Activated CD4-positive, alpha-beta T cell treated with anti-CD3 and anti-CD28 coated beads, Interleukin-2, amount 10 ng/mL, durations not matched to agents 24 days and 14 days (primary cell): ENCODE measurements at regions of chr18 and their contacts with region 1.

Region 1: GRCh38 chr18:54284981-54285785 is 15.9 kb downstream of the POLI start:
- DNase-seq: peak; percentile 82
- H3K4me3 Mint-ChIP-seq: peak overlapping the region; percentile 19
- H3K27ac Mint-ChIP-seq: peak overlapping the region; percentile 78
- H3K4me1 Mint-ChIP-seq: peaks cover 18% of the 10 kb centered on the region
- H3K27me3 Mint-ChIP-seq: no peaks in the 10 kb centered on the region

Region 2: DNA sequence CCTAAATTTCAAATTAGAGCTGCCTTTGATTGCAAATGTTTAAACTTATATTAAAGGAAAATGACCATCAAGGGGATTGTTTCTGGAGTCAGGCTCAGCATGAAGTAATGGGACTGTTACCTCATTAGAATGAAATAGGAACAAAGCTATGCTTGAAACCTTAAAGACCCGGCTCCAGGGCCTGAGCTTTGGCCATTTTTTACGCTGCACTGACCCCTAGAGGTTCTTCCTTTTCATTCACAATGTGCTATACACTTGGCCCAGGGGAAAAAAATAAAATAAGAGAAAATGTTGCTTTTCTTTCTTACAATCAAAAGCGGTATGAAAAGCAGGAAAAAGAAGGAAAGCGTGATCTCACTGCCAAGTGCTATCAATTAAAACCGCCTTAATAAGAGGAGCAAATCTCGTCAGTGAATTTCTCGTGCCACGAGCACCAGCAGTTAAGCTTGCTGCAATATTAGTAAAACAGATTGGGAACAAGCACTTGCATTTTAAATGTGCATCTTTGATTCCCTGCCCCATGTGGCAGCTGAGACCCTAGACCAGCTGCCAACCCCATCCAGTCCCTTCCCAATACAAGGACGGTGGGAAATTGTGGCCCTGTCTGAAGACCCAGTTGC is 157.3 kb before region 1 on chr18:
- intact Hi-C with region 1: no loop called
- DNase-seq: peak; percentile 69
- H3K4me3 Mint-ChIP-seq: no peak overlapping the region
- H3K27ac Mint-ChIP-seq: no peak overlapping the region
- H3K4me1 Mint-ChIP-seq: peaks cover 15% of the 10 kb centered on the region
- H3K27me3 Mint-ChIP-seq: no peaks in the 10 kb centered on the region

Region 3: DNA sequence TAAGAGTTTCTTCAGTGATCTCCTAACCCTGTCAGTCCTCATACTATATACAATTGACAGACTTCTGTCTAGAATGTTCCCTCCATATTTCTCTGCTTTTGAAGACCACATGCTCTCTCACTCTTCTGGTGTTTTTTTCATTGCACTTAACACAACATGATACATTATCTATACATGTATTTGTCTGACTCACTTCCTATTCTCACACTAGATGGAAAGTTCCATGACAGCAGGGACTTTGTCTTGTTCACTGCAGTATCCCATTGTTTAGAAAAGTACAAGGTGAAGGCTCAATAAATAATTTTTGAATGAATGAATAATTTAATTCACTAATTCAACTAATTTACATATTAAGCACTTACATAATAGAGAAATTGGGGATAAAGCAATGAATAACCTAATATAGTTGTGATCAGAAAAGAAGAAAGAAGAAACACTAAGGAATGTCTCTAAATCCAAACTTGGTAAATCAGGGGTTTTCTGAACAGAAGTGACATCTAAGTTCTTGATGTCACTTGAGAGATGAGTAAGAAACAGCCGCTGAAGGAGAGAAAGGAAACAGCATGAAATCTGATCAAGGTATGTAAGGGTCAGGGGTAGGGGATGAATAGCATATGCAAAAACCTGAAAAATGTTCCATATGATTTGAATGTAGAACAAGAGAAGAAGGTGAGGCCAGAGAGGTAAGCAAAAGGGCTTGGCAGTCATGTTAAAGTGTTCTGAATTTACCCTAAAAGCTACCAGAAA is 103.2 kb before region 1 on chr18:
- intact Hi-C with region 1: loop called (anchors 1 kb)
- DNase-seq: no peak
- H3K4me3 Mint-ChIP-seq: no peak overlapping the region
- H3K27ac Mint-ChIP-seq: no peak overlapping the region
- H3K4me1 Mint-ChIP-seq: peaks cover 10% of the 10 kb centered on the region
- H3K27me3 Mint-ChIP-seq: no peaks in the 10 kb centered on the region

Region 4: DNA sequence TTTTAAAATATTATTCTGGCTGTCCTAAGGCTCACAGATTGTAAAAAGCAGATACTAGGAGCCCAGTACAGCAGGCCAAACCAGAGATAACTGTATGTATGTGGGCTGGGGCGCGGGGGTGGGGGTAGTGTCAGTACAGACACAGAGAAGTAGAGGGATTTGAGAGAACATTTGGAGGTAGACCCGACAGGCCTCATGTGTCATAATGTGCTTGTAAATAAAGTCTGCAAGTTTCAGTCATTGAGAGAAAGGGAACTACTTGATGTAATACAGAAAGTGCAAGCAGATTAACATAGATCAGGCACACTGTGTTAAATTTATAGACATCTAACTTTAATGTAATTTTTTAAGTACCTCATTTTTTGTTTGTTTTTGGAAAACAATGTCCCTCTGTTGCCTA is 23.3 kb before region 1 on chr18:
- intact Hi-C with region 1: loop called (anchors 1 kb)
- DNase-seq: peak; percentile 69
- H3K4me3 Mint-ChIP-seq: peak overlapping the region; percentile 54
- H3K27ac Mint-ChIP-seq: peak overlapping the region; percentile 96
- H3K4me1 Mint-ChIP-seq: peaks cover 42% of the 10 kb centered on the region
- H3K27me3 Mint-ChIP-seq: no peaks in the 10 kb centered on the region

Region 5: GRCh38 chr18:54357660-54358494 is 72.7 kb after region 1 on chr18 and contains the starts of genes C18orf54 and STARD6:
- intact Hi-C with region 1: loop called (anchors 2 kb)
- DNase-seq: peak; percentile 98
- H3K4me3 Mint-ChIP-seq: peak within 1 kb of the TSS; percentile 99
- H3K27ac Mint-ChIP-seq: peak within 1 kb of the TSS; percentile 100
- H3K4me1 Mint-ChIP-seq: peaks cover 25% of the 10 kb centered on the region
- H3K27me3 Mint-ChIP-seq: no peaks in the 10 kb centered on the region
- total RNA-seq, gene C18orf54: 10.9 and 12.8 TPM in 2 replicates
- total RNA-seq, gene STARD6: not detected in 2 replicates